ENCODE measurements at regions of chr5 and their contacts with region 1.

Region 1: DNA sequence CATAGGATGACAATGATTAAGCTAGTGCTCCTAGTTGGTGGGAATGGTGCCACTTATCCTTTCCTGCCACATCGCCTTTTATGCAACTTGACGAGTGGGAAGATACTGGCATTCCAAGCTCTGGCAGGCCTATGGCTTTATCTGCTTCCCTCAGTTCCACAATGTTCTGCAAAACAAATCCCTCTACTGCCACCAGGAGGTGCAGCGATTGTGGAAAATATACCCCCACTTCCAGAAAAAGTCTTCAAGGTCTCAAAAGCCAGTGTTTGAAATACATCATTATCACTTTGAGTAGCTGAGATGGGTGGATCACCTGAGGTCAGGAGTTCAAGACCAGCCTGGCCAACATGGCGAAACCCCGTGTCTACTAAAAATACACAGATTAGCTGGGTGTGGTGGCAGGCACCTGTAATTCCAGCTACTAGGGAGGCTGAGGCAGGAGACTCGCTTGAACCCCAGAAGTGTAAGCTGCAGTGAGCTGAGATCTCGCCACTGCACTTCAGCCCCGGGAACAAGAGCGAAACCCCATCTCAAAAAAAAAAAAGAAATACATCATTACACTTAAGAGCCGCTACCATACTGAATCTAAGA is 3.4 kb downstream of the CLINT1 start:
- DNase-seq: no peak
- H3K4me3 ChIP-seq: no peak overlapping the region
- CTCF ChIP-seq: peak; percentile 61

Region 2: GRCh38 chr5:157828944-157829632 is 26.4 kb before region 1 on chr5:
- CTCF ChIA-PET with region 1: interaction called, 19 read pairs
- POLR2A ChIA-PET with region 1: interaction called, 3 read pairs
- DNase-seq: no peak
- H3K4me3 ChIP-seq: no peak overlapping the region
- CTCF ChIP-seq: peak; percentile 23

Region 3: DNA sequence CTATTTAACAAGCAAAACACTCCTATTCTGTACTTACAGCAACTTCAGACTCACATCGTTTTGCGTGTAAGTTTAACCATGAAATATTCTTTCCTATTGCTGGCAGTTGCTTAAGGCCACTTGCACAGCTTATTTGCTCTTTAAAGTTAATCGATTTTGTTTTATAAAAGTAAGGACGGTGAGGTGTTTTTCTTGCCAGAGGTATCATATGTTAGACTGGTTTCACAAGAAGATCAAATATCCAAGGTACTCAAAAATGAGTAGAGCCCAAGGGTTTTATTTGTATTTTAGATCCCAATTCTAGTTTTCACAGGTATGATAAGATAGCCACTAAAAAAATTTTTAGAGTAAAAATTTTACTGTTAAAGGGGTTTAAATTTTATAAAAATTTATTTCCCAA is 12.7 kb before region 1 on chr5:
- CTCF ChIA-PET with region 1: interaction called, 30 read pairs
- POLR2A ChIA-PET with region 1: interaction called, 3 read pairs
- DNase-seq: no peak
- H3K4me3 ChIP-seq: no peak overlapping the region
- CTCF ChIP-seq: no peak

Region 4: DNA sequence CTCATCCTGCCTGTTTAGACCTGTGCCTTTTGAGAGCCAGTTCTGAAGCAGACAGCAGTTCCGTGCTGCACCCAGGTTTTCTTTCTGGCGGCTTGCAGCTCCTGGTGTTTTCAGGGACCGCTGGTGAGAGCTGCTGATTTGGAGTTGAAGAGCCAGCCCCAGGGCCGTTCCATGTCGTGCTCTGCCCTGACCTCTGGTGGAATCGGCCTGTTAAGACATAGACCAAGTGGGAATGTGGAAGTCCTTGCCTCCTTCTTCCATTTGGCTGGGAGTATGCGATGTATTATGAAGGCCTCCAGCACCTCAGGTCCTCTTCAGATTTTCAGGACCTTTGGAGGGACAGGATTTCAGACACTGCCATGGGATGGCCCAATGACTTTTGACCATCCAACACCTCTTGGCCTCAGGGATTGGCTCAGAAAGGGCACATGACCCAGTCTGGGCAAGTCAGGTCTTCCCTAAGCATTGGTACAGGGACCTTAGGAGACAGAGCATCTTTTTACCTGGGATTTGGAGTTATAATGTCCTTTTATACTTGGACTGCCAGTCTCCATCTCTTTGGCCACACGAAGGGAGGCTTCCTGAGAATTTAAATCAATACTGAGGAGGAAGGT is 139.5 kb after region 1 on chr5:
- CTCF ChIA-PET with region 1: interaction called, 29 read pairs
- POLR2A ChIA-PET with region 1: no interaction called
- DNase-seq: no peak
- H3K4me3 ChIP-seq: no peak overlapping the region
- CTCF ChIP-seq: peak; percentile 86

Region 5: GRCh38 chr5:158406884-158407823 is 551.7 kb after region 1 on chr5:
- CTCF ChIA-PET with region 1: no interaction called
- POLR2A ChIA-PET with region 1: no interaction called
- DNase-seq: peak; percentile 41
- H3K4me3 ChIP-seq: no peak overlapping the region
- CTCF ChIP-seq: no peak

Measured in AG04449 (cell line).